MCF 10A (cell line): ENCODE measurements at regions of chr20 and their contacts with region 1.

Region 1: GRCh38 chr20:41339507-41340326 is 904 bp upstream of the LPIN3 start:
- DNase-seq: peak; percentile 89
- H3K4me3 Mint-ChIP-seq: peak overlapping the region; percentile 80
- H3K27ac Mint-ChIP-seq: peak overlapping the region; percentile 96
- H3K4me1 Mint-ChIP-seq: peaks cover 33% of the 10 kb centered on the region
- H3K27me3 Mint-ChIP-seq: no peaks in the 10 kb centered on the region
- CTCF ChIP-seq: peak; percentile 99

Region 2: DNA sequence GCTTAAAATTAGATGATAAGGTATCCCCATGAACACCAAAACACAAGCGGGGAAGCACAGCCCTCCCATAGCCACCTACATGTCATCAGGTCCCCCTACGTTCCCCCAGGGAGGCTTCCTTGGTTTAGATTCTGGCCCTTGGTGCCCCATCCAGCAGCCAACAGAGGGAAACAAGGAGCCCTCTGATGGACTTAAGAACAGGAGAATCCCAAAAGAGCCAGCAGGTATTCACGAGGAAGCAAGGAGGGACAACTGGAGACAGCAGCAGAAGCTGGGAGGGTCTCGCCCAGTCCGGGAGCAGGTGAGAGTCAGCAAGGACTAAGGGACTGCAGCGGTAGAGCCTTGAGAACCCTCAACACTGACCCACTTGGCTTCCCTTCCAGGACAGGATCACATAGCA is 369.5 kb before region 1 on chr20:
- CTCF ChIA-PET with region 1: interaction called, 26 read pairs
- POLR2A ChIA-PET with region 1: interaction called, 9 read pairs
- intact Hi-C with region 1: loop called (anchors 1 kb)
- DNase-seq: no peak
- H3K4me3 Mint-ChIP-seq: no peak overlapping the region
- H3K27ac Mint-ChIP-seq: no peak overlapping the region
- H3K4me1 Mint-ChIP-seq: peaks cover 14% of the 10 kb centered on the region
- H3K27me3 Mint-ChIP-seq: no peaks in the 10 kb centered on the region
- CTCF ChIP-seq: no peak

Region 3: DNA sequence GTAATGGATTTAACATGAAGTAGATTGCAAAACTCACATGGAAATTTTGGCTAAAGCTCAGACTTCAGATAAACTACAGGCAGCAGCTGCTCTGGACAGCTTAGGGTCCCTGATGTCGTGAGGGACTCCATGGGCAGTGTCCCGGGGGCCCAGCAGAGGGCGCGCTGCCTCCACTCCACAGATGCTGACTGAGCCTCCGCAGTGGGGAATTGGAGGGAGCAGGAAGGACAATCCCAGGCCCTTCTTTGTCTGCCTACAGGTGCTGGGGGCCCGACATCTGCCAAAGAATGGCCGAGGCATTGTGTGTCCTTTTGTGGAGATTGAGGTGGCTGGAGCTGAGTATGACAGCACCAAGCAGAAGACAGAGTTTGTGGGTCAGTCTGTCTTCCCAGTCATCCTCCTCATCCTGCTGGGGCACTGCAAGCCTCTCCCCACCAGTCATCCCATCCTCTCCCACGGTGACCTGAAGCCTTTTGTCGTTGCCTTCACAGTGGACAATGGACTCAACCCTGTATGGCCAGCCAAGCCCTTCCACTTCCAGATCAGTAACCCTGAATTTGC is 166.5 kb before region 1 on chr20:
- CTCF ChIA-PET with region 1: interaction called, 314 read pairs
- POLR2A ChIA-PET with region 1: interaction called, 19 read pairs
- intact Hi-C with region 1: loop called (anchors 1 kb)
- DNase-seq: peak; percentile 72
- H3K4me3 Mint-ChIP-seq: no peak overlapping the region
- H3K27ac Mint-ChIP-seq: peak overlapping the region; percentile 59
- H3K4me1 Mint-ChIP-seq: peaks cover 27% of the 10 kb centered on the region
- H3K27me3 Mint-ChIP-seq: no peaks in the 10 kb centered on the region
- CTCF ChIP-seq: peak; percentile 97

Region 4: DNA sequence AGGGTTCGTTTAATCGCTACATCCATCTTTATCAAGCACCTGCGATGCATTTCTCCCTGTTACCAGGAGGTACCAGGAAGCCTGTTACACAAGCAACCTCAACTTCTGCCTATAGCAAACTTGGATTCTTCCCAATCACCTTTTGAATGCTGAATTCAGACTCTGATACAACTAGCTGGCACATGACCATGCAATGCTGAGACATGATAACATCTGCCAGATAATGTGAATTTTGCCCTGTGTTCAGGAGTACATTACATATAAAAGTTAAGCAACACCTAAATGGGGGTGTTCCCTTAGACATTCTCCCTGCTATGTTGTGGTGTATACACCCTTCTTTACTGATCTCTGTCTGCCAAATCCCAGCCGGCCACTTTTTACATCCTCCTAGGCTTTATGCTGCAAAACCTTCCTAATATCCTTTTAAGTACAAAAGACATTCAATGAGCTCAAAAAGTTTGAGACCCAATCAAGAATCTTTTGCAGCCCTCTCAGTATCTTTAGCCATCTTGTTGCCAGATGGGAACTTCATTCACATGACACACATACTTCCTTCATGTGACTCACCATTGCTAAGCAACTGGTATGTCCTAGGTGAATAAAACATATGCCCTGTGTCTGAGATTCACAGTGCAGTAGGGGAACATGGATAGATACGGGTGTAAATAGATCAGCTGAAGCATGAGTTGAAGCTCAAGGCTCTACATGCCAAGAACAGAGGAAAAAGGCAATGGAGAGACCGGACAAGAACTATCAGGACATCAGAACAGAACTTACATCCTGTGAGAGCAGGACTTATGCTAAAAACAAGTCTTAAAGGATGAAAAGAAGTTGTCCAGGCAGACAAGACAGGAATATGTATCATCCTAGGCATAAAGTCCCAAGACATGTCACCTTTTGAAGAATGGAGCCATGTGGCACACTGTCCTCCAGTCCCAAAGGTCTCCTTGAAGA is 106.5 kb before region 1 on chr20:
- CTCF ChIA-PET with region 1: interaction called, 79 read pairs
- POLR2A ChIA-PET with region 1: interaction called, 65 read pairs
- intact Hi-C with region 1: loop called (anchors 1 kb)
- DNase-seq: peak; percentile 73
- H3K4me3 Mint-ChIP-seq: peak overlapping the region; percentile 52
- H3K27ac Mint-ChIP-seq: peak overlapping the region; percentile 97
- H3K4me1 Mint-ChIP-seq: peaks cover 33% of the 10 kb centered on the region
- H3K27me3 Mint-ChIP-seq: no peaks in the 10 kb centered on the region
- CTCF ChIP-seq: no peak

Region 5: DNA sequence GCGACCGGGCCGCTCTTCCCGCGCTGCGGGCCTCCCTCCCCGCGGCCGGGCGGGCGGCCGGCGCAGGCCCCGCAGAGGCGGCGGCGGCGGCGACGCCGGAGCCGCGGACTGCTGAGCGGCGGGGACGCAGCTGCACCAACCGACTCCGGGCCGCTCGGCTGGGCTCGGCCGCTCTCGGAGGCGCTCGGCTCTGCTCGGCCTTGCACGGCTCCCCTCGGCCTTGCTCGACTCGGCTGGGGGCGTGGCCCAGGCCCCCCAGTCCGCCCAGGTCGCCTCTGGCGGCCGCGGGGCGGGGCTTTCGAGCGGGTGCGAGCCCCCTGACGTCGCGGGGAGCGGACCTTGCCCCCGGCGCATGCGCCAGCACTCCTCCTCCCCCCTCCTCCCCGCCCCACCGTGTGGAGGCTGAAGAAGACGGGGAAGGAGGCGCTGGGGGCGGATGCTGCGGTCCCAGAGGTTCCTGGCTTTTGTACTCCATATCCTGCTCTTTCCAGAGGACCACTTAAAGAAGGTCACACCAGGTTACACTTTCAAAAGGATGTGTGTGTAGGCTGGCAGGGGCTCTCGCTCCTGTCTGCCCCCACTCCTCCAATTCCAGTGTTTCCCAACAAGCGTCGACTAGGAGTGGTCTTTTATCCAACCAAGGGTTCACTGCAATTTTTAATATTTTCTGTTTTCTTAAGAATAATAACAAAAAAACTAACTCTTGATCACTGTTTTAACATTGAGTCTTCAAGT is 22.0 kb before region 1 on chr20 and contains the start of gene ZHX3:
- CTCF ChIA-PET with region 1: interaction called, 59 read pairs
- POLR2A ChIA-PET with region 1: interaction called, 18 read pairs
- intact Hi-C with region 1: no loop called
- DNase-seq: peak; percentile 96
- H3K4me3 Mint-ChIP-seq: peak within 1 kb of the TSS; percentile 99
- H3K27ac Mint-ChIP-seq: peak within 1 kb of the TSS; percentile 63
- H3K4me1 Mint-ChIP-seq: peaks cover 29% of the 10 kb centered on the region
- H3K27me3 Mint-ChIP-seq: no peaks in the 10 kb centered on the region
- CTCF ChIP-seq: no peak
- total RNA-seq, gene ZHX3: 23.8 and 34.1 TPM in 2 replicates

Region 6: DNA sequence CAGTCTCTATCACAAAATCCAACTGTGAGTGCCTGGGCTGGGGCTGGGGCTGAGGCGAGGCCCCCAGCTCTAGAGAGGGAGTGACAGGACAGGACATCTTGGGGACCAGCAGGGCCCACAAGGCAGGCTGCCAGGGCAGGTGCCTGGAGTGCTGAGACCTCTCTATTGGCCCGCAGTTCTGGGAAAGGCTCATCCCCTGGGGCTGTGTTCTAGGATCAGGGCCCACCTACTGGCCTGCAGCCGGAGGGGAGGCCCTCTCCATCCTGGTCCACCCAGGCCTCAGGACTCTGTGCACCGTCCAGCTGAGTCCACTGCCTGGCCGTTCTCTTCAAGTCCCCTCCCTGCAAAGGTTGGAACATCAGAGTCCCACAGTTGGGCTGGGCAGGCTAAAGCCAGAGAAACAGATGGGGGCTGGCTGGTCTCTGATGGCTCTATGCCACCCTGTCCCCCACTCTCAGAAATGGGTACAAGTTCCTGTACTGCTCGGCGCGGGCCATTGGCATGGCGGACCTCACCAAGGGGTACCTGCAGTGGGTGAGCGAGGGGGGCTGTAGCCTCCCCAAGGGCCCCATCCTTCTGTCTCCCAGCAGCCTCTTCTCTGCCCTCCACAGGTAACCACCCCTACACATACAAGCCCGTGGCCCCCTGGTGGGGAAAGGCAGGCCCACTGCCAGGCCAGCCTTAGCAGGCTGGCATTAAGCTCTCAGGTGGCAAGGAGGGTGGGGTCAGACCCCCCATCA is 17.9 kb after region 1 on chr20:
- CTCF ChIA-PET with region 1: interaction called, 25 read pairs
- POLR2A ChIA-PET with region 1: interaction called, 5 read pairs
- intact Hi-C with region 1: no loop called
- DNase-seq: no peak
- H3K4me3 Mint-ChIP-seq: no peak overlapping the region
- H3K27ac Mint-ChIP-seq: no peak overlapping the region
- H3K4me1 Mint-ChIP-seq: peaks cover 4% of the 10 kb centered on the region
- H3K27me3 Mint-ChIP-seq: no peaks in the 10 kb centered on the region
- CTCF ChIP-seq: no peak